ENCODE measurements at regions of chr22 and their contacts with region 1.

Region 1: GRCh38 chr22:46563381-46564083 is 26.1 kb upstream of the CELSR1 start:
- DNase-seq: peak; percentile 83
- H3K4me3 Mint-ChIP-seq: no peak overlapping the region
- H3K27ac Mint-ChIP-seq: peak overlapping the region; percentile 4
- H3K4me1 Mint-ChIP-seq: peaks cover 13% of the 10 kb centered on the region
- H3K27me3 Mint-ChIP-seq: no peaks in the 10 kb centered on the region

Region 2: DNA sequence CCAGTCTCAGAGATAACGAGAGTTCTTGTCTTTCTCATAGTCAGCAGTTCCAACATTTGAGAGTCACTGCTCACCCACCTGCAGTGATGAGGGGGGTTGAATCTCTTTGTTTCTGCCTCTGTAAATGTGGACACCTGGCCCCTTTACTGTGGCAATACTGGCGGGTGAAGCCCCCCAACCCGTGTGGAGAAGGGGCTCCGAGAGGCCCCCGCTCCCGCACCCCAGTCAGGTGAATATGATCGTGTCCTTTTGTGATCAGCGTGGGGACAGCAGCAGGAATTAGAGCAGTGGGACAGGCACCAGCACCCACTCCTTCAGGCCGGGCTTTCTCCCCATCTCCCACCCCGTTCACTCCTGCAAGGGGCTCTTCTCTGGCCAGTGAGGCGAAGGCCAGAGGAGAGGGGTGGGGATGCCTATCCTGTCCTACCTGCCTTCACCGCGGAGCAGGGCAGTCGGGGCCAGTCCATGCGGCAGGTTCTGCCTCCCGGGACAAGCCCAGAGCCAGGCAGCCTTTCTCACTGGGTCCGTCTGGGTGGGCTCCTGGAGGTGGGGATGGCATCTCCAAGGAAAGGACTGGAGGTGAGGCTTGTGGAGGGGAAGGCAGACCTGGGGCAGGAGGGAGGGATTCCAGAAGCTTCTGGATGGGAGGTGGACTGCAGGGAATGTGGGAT is 13.4 kb before region 1 on chr22:
- CTCF ChIA-PET with region 1: interaction called, 19 read pairs
- POLR2A ChIA-PET with region 1: no interaction called
- DNase-seq: no peak
- H3K4me3 Mint-ChIP-seq: no peak overlapping the region
- H3K27ac Mint-ChIP-seq: no peak overlapping the region
- H3K4me1 Mint-ChIP-seq: peaks cover 1% of the 10 kb centered on the region
- H3K27me3 Mint-ChIP-seq: peaks cover 6% of the 10 kb centered on the region

Region 3: DNA sequence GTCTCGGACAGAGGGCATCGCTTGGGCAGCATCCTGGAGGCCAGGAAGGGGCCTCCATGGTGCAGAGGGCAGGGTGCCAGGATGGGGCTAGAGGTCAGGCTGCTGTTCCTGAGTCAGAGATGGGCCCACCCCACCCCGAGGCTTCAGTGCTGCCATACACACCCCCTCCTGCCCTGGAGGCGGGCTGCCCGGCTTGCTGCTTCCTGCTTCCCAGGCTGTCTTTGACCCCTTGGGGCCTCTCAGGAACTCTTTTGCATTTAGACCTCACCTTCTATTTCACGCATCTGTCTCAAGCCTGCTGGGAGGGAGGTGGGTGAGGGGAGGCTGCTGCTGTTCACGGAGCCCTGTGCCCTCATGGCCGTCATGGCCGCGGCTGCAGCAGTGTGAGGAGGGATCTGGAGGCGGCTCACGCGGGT is 50.1 kb after region 1 on chr22:
- CTCF ChIA-PET with region 1: interaction called, 5 read pairs
- POLR2A ChIA-PET with region 1: interaction called, 12 read pairs
- DNase-seq: no peak
- H3K4me3 Mint-ChIP-seq: peak overlapping the region; percentile 81
- H3K27ac Mint-ChIP-seq: peak overlapping the region; percentile 95
- H3K4me1 Mint-ChIP-seq: peaks cover 28% of the 10 kb centered on the region
- H3K27me3 Mint-ChIP-seq: no peaks in the 10 kb centered on the region

Region 4: GRCh38 chr22:46674367-46674781 is 110.8 kb after region 1 on chr22:
- CTCF ChIA-PET with region 1: interaction called, 13 read pairs
- POLR2A ChIA-PET with region 1: interaction called, 4 read pairs
- DNase-seq: peak; percentile 93
- H3K4me3 Mint-ChIP-seq: peak overlapping the region; percentile 82
- H3K27ac Mint-ChIP-seq: peak overlapping the region; percentile 89
- H3K4me1 Mint-ChIP-seq: peaks cover 27% of the 10 kb centered on the region
- H3K27me3 Mint-ChIP-seq: no peaks in the 10 kb centered on the region

Region 5: DNA sequence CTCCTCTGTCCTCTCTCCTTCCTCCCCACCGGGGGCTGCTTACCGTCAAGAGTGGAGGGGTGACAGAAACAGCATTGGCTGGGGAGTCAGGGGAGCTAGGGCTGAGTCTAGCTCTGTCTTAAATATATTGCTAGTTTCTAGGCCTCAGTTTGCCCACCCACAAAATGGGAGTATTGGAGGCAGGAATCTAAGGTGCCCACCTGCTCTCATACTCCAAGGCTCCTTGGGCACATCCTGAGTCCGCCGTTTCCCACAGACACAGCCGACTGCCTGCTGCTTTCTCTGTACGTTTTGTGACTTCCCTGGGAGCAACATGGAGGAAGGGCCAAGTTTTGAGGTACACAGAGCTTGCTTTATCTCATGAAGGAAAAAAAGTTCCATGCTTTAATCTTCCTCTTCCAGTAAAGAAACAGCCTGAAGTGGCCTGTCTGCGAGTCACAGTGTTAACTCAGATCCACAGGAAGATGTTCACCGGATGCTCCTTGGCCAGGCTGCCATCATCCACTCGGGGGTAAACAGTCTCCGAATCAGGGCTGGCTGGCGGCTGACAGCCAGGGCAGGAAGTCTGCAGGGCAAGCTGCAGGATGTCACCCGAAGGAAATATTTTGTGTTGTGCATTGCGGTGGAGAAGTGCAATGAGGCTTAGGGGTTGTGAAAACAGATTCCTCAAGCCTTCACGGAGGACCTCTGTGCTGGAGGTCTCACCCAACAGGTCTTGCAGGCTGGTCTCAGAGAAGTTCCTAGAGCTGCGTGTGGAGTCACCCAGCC is 185.6 kb after region 1 on chr22:
- CTCF ChIA-PET with region 1: interaction called, 10 read pairs
- POLR2A ChIA-PET with region 1: no interaction called
- DNase-seq: peak; percentile 68
- H3K4me3 Mint-ChIP-seq: peak overlapping the region; percentile 62
- H3K27ac Mint-ChIP-seq: peak overlapping the region; percentile 91
- H3K4me1 Mint-ChIP-seq: peaks cover 22% of the 10 kb centered on the region
- H3K27me3 Mint-ChIP-seq: no peaks in the 10 kb centered on the region

Region 6: GRCh38 chr22:46798366-46799350 is 235.1 kb after region 1 on chr22:
- CTCF ChIA-PET with region 1: interaction called, 14 read pairs
- POLR2A ChIA-PET with region 1: no interaction called
- DNase-seq: peak; percentile 80
- H3K4me3 Mint-ChIP-seq: no peak overlapping the region
- H3K27ac Mint-ChIP-seq: no peak overlapping the region
- H3K4me1 Mint-ChIP-seq: peaks cover 16% of the 10 kb centered on the region
- H3K27me3 Mint-ChIP-seq: no peaks in the 10 kb centered on the region

Measured in activated CD4-positive, alpha-beta memory T cell treated with anti-CD3 and anti-CD28 coated beads, Interleukin-2, amount 10 ng/mL, durations not matched to agents 7 days and 5 days (primary cell).